Right ventricle myocardium superior (tissue), 1 donor: ENCODE measurements at regions of chr15 and their contacts with region 1.

Region 1: GRCh38 chr15:82108489-82109078 is 62.8 kb upstream of the MEX3B start:
- DNase-seq: peak; percentile 71
- ATAC-seq: peak; percentile 95

Region 2: DNA sequence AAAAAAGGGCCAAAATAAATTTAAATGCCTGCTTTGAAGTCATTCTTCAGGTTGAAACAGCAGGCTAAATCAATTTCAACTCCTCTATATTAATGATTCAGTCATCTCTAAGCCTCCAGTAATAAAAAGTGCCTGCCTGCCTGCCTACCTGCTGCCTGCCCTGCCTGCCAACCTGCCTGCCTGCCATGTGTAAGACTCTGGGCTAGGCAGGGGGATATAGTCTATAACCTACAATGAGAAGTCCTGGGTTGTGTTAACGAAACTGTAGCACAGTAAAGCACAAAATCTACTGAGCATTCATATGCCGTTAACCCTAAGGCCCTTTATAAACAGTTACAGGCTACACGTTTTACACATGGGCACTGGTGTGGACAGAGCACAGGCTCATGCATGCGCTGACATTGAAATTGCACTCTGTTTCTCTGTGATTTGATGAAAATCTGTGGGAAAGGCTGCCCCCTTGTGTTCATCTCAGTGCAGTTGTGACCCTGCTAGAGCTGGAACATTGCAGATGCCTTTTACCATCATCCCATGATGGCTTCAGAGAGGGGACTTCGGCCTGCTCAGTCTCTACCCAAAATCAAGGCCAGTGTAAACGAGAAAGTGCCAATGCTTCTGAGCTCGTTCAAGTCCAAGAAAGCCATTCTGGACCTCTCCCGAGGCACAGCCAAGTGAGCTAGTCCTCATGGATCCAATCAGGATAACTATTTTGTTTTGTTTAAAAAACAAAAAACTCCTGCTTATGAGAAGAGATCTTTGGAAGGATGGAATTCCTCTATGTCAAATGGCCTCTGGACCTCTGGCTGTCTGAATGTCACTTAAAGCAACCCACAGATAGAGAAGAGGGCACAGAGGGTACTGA is 89.4 kb after region 1 on chr15:
- intact Hi-C with region 1: loop called (anchors 2 kb)
- DNase-seq: peak; percentile 67
- ATAC-seq: peak; percentile 85